Heart left ventricle (tissue), 16 donors: ENCODE measurements at regions of chr17 and their contacts with region 1.

Region 1: GRCh38 chr17:64315032-64315490 is 52.0 kb upstream of the TEX2 start:
- DNase-seq: peak; percentile 89 to 93 (median 92)
- ATAC-seq: peak; percentile 92 to 97 (median 95)
- H3K4me3 ChIP-seq: no peak overlapping the region
- H3K27ac ChIP-seq: peak overlapping the region; percentile 17 to 84 (median 70)
- H3K4me1 ChIP-seq: peaks cover 0 to 39% (median 19%) of the 10 kb centered on the region in 12 donors
- H3K27me3 ChIP-seq: no peaks in the 10 kb centered on the region
- CTCF ChIP-seq: no peak
- POLR2A ChIP-seq: no peak

Region 2: DNA sequence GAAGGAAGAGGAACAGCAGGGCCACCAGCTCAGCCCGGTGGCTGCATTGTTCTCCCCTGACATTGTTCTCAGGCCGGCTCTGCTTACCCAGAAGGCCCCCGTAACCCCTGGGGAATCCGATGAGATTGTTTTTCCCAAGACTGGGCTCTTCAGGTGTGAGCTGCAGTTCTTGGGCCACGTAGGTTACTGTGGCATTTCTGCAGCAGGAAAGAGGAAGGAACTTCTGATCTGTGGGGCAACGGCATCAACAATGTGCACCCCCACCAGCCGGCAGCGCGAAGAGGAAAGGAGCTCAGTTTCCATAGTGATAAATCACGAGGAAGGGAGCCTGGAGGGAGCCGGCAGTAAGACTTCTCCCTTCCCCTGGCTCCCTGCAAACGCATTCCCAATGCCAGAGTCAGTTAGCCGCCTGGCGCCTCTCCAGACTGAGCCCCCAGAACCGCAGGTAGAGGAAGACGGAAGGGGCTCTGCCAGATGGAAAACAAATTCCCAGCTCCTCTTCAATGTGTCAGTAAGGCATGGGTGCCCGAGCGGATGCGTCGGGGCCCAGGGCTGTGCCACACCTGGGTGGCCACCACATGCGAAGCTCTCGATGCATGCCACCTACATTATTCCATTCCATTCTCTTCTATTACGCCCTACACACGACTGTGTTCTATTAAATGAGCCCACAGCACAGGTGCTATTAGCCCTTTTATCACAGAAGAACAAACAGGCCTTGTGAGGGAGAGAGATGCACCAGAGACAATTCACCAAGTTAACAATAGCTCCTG is 97.1 kb after region 1 on chr17:
- intact Hi-C with region 1: loop called in 7 of 10 experiments (anchors 2 to 5 kb)
- DNase-seq: peak; percentile 69 to 78 (median 72)
- ATAC-seq: peak; percentile 47 to 88 (median 73)
- H3K4me3 ChIP-seq: peak overlapping the region in 9 of 12 donors; percentile 1 to 53 (median 22)
- H3K27ac ChIP-seq: peak overlapping the region in 10 of 12 donors; percentile 40 to 89 (median 70)
- H3K4me1 ChIP-seq: peaks cover 0 to 36% (median 14%) of the 10 kb centered on the region in 12 donors
- H3K27me3 ChIP-seq: no peaks in the 10 kb centered on the region
- CTCF ChIP-seq: no peak
- POLR2A ChIP-seq: no peak

Region 3: GRCh38 chr17:64496786-64497564 is 181.9 kb after region 1 on chr17 and contains the start of gene POLG2:
- intact Hi-C with region 1: loop called in 1 of 10 experiments (anchors 10 kb)
- DNase-seq: peak; percentile 92 to 97 (median 95)
- ATAC-seq: peak; percentile 93 to 98 (median 96)
- H3K4me3 ChIP-seq: peak within 1 kb of the TSS; percentile 44 to 89 (median 68)
- H3K27ac ChIP-seq: peak within 1 kb of the TSS; percentile 42 to 91 (median 83)
- H3K4me1 ChIP-seq: peaks cover 2 to 88% (median 50%) of the 10 kb centered on the region in 12 donors
- H3K27me3 ChIP-seq: no peaks in the 10 kb centered on the region
- CTCF ChIP-seq: peak in 11 of 12 donors; percentile 12 to 54 (median 32)
- POLR2A ChIP-seq: peak in 1 of 2 donors; percentile 63
- total RNA-seq, gene POLG2: 1.4 to 8.7 (median 5.7) TPM